Activated CD4-positive, alpha-beta memory T cell treated with anti-CD3 and anti-CD28 coated beads, Interleukin-2, amount 10 ng/mL, durations not matched to agents 7 days and 5 days (primary cell): ENCODE measurements at regions of chr16 and their contacts with region 1.

Region 1: DNA sequence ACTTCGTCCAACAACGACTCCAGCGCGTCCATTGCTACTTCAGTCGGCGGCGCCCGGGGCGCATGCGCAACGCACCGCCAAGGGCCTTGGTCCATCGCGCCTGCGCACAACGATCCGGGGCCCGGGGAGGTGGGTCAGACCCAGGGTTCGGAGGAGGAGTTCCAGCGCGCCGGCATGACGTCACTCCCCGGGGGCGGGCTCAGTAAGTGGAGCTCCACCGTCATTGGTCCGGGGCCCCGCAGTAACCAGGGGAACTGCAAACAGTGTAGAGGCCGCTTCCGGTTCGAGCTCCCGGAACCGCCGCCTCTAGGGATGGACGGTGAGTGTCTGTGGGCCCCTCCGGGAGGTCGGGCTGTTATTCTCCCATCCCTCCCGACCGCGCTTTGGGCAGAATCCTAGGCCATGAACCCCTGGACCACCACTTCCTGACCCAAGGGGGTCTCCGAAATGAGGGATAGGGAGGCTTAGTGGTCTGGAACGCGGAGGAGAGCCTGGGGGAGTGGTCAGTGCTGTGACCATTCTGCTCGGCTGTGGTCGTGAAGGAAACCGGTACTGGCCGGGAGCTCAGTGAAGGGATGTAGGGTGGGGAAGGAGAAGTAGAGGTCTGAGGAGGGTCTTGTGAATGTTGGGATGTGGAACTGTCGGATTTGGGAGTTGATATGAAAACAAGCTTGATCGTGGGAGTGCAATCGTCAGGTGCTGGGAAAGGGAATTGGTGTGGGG is at the starts of genes GTF3C1 and KATNIP:
- DNase-seq: peak; percentile 100
- H3K4me3 Mint-ChIP-seq: peak within 1 kb of the TSS; percentile 93
- H3K27ac Mint-ChIP-seq: peak within 1 kb of the TSS; percentile 78
- H3K4me1 Mint-ChIP-seq: peaks cover 40% of the 10 kb centered on the region
- H3K27me3 Mint-ChIP-seq: no peaks in the 10 kb centered on the region
- total RNA-seq, gene GTF3C1: 48.9 to 53.6 TPM
- total RNA-seq, gene KATNIP: 15.8 to 18.1 TPM

Region 2: GRCh38 chr16:27526180-27526579 is 23.8 kb before region 1 on chr16:
- CTCF ChIA-PET with region 1: no interaction called
- POLR2A ChIA-PET with region 1: no interaction called
- DNase-seq: no peak
- H3K4me3 Mint-ChIP-seq: no peak overlapping the region
- H3K27ac Mint-ChIP-seq: no peak overlapping the region
- H3K4me1 Mint-ChIP-seq: peaks cover under 1% of the 10 kb centered on the region
- H3K27me3 Mint-ChIP-seq: no peaks in the 10 kb centered on the region

Region 3: DNA sequence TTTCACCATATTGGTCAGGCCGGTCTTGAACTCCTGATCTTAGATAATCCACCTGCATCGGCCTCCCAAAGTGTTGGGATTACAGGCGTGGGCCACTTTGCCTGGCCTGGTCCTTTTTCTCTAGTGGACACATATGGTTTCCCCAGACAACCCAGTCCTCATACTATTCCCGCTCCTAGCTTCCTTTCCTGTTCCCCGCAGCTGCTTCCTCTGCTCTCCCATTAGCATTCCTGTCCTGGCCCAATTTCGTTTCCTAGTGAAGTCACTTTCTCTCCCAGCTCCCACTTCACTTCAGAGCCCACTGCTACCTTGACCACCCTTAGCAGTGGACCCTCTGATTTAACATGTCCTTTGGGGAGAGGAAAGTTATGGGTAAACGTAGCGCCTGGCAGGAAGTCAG is 11.2 kb after region 1 on chr16:
- CTCF ChIA-PET with region 1: interaction called, 3 read pairs
- POLR2A ChIA-PET with region 1: interaction called, 13 read pairs
- DNase-seq: no peak
- H3K4me3 Mint-ChIP-seq: no peak overlapping the region
- H3K27ac Mint-ChIP-seq: no peak overlapping the region
- H3K4me1 Mint-ChIP-seq: no peaks in the 10 kb centered on the region
- H3K27me3 Mint-ChIP-seq: no peaks in the 10 kb centered on the region